ENCODE measurements at regions of chr17 and their contacts with region 1.

Region 1: GRCh38 chr17:7435221-7435675 is at the start of gene TMEM102:
- DNase-seq: peak; percentile 95
- ATAC-seq: peak; percentile 86
- total RNA-seq, gene TMEM102: 2.7 TPM

Region 2: GRCh38 chr17:7403977-7404736 is 31.1 kb before region 1 on chr17 and contains the start of gene TMEM256:
- intact Hi-C with region 1: loop called (anchors 2 kb)
- DNase-seq: peak; percentile 99
- ATAC-seq: peak; percentile 94
- total RNA-seq, gene TMEM256: 64.0 TPM

Region 3: GRCh38 chr17:7589204-7589868 is 154.1 kb after region 1 on chr17:
- intact Hi-C with region 1: loop called (anchors 5 kb)
- DNase-seq: peak; percentile 94
- ATAC-seq: peak; percentile 84